ENCODE measurements at regions of chr3 and their contacts with region 1.

Region 1: DNA sequence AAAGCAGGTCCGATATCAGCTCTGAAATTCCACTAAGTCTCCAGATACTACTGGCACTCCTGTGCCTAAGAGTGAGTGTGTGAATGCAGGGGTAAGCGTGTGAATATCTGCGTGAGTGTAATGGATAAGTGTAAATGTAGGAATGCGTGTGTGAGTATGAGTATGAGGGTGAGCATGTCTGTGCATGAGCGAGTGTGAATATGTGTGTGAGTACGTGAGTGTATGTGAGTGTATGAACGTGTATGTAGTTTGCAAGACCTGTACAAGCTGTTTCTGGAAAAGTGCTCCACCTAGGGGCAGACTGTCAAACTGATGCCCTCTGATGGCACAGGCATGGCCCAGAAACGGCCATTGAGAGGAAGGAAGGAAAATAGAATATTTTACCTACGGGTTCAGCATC is 24.4 kb upstream of the FRMD4B start:
- DNase-seq: peak; percentile 89
- H3K4me3 ChIP-seq: no peak overlapping the region
- H3K27ac ChIP-seq: no peak overlapping the region
- H3K4me1 ChIP-seq: peaks cover 27% of the 10 kb centered on the region
- H3K27me3 ChIP-seq: no peaks in the 10 kb centered on the region
- CTCF ChIP-seq: peak; percentile 83 to 90
- POLR2A ChIP-seq: no peak

Region 2: DNA sequence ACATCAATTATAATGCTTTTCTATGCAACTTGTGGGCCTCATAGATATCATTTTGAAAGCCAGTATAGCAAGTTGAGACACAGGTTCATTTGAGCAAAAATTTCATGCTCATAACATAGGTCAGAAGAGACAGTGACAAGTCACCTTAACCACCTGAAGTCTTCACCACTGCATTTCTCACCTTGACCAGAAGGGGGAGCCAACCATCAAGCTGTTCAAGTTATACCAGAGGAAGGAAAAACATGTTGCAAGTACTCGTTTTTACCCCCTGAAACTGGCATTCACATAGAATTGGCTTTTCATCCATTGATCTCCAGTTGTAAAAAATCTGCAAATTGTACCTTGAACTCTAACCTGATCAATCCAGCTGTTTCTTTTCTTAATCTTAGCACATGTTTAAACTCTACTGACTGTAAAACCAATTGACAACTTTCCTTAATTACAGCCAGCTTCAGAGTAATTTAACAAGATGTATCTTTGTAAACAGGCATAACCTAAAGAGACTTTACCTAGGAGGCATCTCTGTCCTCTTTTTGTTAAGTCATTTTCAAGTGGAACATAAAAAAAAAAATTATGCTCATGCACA is 289.3 kb before region 1 on chr3:
- CTCF ChIA-PET with region 1: interaction called, 10 read pairs
- POLR2A ChIA-PET with region 1: no interaction called
- dilution Hi-C with region 1: no loop called
- intact Hi-C with region 1: no loop called
- DNase-seq: peak; percentile 86
- H3K4me3 ChIP-seq: no peak overlapping the region
- H3K27ac ChIP-seq: no peak overlapping the region
- H3K4me1 ChIP-seq: peaks cover 20% of the 10 kb centered on the region
- H3K27me3 ChIP-seq: no peaks in the 10 kb centered on the region
- CTCF ChIP-seq: peak; percentile 85 to 88
- POLR2A ChIP-seq: no peak

Region 3: DNA sequence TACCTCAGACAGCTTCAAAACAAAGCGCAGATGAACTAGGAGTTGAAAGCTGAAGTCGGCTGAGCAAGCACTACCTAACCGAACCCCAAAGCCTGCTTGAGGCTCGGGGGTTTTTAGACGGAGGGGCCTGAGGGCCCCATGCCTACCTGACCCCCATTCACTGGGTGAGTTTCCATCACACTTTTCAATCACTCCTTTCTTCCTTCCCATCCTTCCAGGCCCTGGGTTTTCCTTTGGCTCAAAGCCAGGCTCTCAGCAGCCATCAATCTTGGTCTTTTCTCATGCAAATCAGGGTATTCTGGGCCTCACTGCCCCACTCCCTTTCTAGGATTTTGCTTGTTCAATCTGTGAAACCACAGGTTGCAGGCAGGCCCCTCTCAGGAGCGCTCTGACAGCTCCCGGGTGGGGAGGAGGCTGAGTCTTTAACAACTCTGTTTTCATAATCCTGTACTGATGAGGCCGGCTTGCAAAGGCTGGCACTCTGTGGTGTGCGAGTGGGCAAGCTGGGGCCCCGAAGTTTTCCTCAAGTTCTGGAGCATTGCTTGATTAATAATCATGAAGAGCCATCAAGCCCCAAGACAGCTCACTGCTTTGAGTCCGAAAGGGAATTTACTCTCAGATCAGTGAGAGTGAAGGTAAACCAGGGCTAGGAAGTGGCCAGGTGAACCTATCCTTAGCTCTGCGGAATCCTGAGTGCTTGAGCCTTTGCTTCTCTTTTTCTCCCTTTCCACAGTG is 121.9 kb before region 1 on chr3:
- CTCF ChIA-PET with region 1: interaction called, 11 read pairs
- POLR2A ChIA-PET with region 1: no interaction called
- dilution Hi-C with region 1: no loop called
- intact Hi-C with region 1: loop called (anchors 1 kb)
- DNase-seq: peak; percentile 21
- H3K4me3 ChIP-seq: no peak overlapping the region
- H3K27ac ChIP-seq: peak overlapping the region; percentile 56
- H3K4me1 ChIP-seq: peaks cover 32% of the 10 kb centered on the region
- H3K27me3 ChIP-seq: no peaks in the 10 kb centered on the region
- CTCF ChIP-seq: no peak
- POLR2A ChIP-seq: no peak

Region 4: DNA sequence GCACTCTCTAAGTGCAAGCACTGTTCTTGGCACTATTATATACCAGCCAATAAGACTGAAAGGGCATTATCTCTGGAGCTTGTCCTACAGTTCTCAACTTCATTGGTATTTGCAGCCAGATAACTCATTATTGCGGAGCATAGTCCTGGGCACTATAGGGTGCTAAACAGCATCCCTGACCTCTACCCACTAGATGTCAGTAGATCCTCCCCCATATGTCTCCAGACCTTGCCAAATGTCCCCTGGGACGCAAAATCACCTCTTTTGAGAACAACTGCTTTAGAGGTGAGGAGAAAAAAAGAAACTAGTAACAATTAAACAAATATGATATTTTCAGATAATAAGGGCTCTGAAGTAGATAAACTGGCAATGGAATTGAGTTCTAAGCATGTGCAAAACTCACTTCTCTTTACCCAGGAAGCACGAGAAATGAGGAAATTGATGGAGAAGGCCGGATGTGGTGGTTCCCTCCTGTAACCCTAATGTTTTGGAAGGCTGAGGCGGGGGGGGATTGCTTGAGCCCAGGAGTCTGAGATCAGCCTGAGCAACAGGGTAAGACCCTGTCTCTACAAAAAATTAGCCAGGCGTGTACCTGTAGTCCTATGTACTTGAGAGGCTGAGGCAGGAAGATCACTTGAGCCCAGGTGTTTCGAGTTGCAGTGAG is 85.8 kb before region 1 on chr3:
- CTCF ChIA-PET with region 1: interaction called, 20 read pairs
- POLR2A ChIA-PET with region 1: interaction called, 3 read pairs
- dilution Hi-C with region 1: no loop called
- intact Hi-C with region 1: loop called (anchors 2 kb)
- DNase-seq: no peak
- H3K4me3 ChIP-seq: no peak overlapping the region
- H3K27ac ChIP-seq: no peak overlapping the region
- H3K4me1 ChIP-seq: peaks cover 28% of the 10 kb centered on the region
- H3K27me3 ChIP-seq: no peaks in the 10 kb centered on the region
- CTCF ChIP-seq: no peak
- POLR2A ChIP-seq: no peak

Region 5: GRCh38 chr3:69353503-69353902 is 56.7 kb before region 1 on chr3:
- CTCF ChIA-PET with region 1: interaction called, 6 read pairs
- POLR2A ChIA-PET with region 1: no interaction called
- dilution Hi-C with region 1: no loop called
- intact Hi-C with region 1: loop called (anchors 1 kb)
- DNase-seq: peak; percentile 98
- H3K4me3 ChIP-seq: peak overlapping the region; percentile 45 to 97 (median 88)
- H3K27ac ChIP-seq: peak overlapping the region; percentile 100
- H3K4me1 ChIP-seq: peaks cover 32% of the 10 kb centered on the region
- H3K27me3 ChIP-seq: no peaks in the 10 kb centered on the region
- CTCF ChIP-seq: no peak
- POLR2A ChIP-seq: peak; percentile 98

Region 6: DNA sequence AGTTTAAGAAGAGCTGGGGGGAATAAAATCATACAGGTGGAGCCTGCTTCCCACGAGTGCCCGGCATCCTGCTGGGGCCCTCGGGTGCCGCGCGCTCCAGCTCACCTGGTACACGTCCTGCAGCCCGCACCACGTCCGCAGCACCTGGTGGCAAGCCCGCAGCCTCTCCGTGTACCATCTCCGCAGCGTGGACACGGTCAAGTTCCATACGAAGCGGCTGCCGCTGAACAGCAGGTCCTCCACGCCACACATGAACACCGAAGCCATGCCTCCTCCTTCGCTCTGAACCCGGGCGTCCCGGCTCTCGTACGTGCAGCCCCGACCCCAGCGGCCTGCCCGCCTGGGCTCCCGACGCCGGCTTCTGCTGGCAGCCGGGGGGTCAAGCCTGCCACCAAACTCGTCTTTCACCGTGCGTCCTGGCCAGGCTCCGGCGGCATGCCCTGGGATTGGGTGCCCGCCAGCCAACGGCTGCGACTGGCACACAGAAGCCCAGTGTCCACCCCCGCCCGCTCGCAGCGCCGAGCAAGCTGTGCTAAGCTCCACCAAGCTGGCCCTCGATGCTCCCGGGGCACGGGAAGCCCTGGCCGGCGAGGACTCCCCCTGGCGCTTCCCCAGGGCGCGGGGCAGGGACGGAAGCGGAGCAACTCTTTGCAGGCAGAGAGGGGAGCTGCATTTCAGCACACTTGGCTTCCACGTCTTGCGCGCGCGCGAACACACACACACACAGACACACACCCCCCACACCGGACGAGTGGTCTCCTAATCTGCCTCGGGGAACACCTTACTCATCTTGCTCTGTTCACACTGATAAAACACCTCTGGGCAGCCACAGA is 24.3 kb before region 1 on chr3 and contains the start of gene FRMD4B:
- CTCF ChIA-PET with region 1: interaction called, 16 read pairs
- POLR2A ChIA-PET with region 1: no interaction called
- dilution Hi-C with region 1: no loop called
- intact Hi-C with region 1: no loop called
- DNase-seq: peak; percentile 74
- H3K4me3 ChIP-seq: peak within 1 kb of the TSS; percentile 18 to 50 (median 33)
- H3K27ac ChIP-seq: no peak within 1 kb of the TSS
- H3K4me1 ChIP-seq: peaks cover 17% of the 10 kb centered on the region
- H3K27me3 ChIP-seq: no peaks in the 10 kb centered on the region
- CTCF ChIP-seq: peak; percentile 38 to 50
- POLR2A ChIP-seq: no peak
- total RNA-seq, gene FRMD4B: 77.7 and 89.7 TPM in 2 replicates

Region 7: DNA sequence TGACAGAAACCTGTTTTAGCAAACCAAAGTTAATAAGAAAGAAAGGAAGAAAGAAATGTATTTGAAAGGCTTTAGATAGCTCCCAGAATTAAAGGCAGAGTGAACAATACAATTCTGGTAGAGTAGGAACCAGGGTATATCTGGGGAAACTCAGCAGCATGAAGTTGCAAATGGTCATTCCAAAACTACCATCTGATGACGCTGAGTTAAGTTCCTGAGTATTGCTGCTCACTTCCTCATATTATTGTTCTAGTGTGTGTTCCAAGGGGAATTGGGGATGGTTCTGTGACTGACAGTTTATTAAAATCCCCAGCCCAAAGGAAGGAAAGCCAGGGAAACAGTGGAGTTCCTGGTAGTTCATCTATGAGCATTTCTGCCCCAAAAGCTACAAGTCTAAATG is 63.9 kb after region 1 on chr3:
- CTCF ChIA-PET with region 1: no interaction called
- POLR2A ChIA-PET with region 1: no interaction called
- dilution Hi-C with region 1: no loop called
- intact Hi-C with region 1: no loop called
- DNase-seq: no peak
- H3K4me3 ChIP-seq: no peak overlapping the region
- H3K27ac ChIP-seq: no peak overlapping the region
- H3K4me1 ChIP-seq: no peaks in the 10 kb centered on the region
- H3K27me3 ChIP-seq: peaks cover 10 to 22% of the 10 kb centered on the region in 2 experiments
- CTCF ChIP-seq: no peak
- POLR2A ChIP-seq: no peak

Measured in endothelial cell of umbilical vein (primary cell).